Cardiac septum (tissue), 1 donor: ENCODE measurements at regions of chr5 and their contacts with region 1.

Region 1: GRCh38 chr5:136992796-136993489 is 506.2 kb downstream of the SPOCK1 start:
- DNase-seq: no peak

Region 2: DNA sequence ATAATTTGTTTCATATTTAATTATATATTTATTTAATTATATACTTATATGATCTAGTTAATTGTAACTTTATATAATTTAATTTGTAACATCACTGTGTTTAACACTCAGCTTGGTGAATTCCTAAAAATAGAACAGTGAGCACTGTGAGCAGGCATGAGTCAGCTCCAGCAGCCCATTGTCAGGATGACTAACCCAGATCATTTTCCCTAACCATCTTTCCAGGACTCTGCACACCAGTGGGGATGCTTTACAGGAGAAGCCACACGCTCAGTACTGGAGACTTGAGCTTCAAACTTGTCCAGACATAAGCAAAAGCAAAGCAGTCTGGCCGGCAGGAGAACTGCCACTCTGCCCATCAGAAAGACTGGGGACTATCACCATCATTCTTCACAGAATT is 181.4 kb before region 1 on chr5:
- intact Hi-C with region 1: loop called (anchors 2 kb)
- DNase-seq: no peak

Region 3: DNA sequence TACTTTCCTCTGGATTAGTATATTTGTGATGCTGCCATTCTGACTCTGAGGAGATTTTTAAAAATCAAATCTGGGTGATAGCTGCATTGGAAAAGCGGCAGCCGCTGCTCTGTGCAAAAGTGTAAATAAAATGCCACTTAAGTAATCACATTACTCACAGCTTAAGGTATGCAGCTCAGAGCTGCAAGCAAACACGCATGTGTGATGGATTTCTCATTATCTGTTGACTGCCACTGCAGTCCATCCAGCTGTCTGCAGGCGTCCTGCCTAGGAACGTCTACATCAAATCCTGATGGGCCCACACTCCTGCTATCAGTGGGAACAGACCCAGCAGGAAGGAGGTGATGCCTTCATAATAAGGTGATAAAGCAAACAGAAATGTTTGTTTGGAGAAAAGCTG is 289.3 kb after region 1 on chr5:
- intact Hi-C with region 1: loop called (anchors 10 kb)
- DNase-seq: no peak

Region 4: DNA sequence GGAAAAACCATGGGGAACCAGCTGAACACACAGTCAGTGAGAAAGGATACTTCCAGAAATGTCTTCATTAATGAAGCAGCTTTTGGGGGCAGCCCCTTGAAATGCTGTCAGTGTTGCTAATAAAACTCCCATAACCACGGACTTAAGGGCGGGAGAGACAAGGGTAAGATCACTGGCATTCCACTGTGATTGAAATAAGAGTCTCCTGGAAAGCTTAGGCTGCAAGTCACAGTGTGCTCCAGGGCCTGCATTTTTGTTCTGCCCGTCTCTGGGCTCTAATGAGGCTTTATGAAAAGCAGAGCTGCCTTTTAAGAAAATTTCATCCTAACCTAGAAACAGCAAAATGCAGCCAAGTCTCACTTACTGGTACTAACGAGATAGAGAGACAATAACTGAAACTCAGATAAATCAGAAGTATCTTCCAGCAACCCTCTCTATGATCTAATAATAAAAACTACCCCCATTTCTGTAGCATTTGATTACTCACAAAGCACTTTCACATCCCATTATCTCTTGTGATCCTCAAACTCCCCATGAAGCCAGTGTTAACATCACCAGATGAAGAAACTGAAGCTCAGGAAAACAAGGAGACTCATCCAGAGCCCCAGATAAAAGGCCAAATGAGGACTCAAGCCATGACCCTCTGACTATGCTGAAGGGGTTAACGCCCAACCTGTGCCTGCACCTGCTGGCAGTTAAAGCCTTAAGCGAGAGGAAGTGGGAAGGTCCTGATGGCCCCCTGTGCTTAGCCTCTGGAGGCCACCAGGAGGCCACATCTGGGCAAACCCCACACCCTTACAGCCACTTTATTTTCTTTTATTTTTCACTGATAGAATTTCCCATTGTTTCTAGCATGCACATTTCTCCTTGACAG is 468.7 kb after region 1 on chr5:
- intact Hi-C with region 1: no loop called
- DNase-seq: no peak